B cell (primary cell): ENCODE measurements at regions of chr1 and their contacts with region 1.

Region 1: GRCh38 chr1:159161001-159161718 is 10.3 kb upstream of the CADM3 start:
- DNase-seq: peak; percentile 82
- ATAC-seq: peak; percentile 98
- H3K4me3 ChIP-seq: no peak overlapping the region
- H3K4me3 Mint-ChIP-seq: no peak overlapping the region
- H3K27ac ChIP-seq: no peak overlapping the region
- H3K27ac Mint-ChIP-seq: no peak overlapping the region
- H3K4me1 ChIP-seq: peaks cover 4 to 6% of the 10 kb centered on the region in 2 donors
- H3K4me1 Mint-ChIP-seq: peaks cover 7% of the 10 kb centered on the region
- H3K27me3 ChIP-seq: no peaks in the 10 kb centered on the region
- H3K27me3 Mint-ChIP-seq: no peaks in the 10 kb centered on the region
- CTCF ChIP-seq: peak; percentile 96

Region 2: DNA sequence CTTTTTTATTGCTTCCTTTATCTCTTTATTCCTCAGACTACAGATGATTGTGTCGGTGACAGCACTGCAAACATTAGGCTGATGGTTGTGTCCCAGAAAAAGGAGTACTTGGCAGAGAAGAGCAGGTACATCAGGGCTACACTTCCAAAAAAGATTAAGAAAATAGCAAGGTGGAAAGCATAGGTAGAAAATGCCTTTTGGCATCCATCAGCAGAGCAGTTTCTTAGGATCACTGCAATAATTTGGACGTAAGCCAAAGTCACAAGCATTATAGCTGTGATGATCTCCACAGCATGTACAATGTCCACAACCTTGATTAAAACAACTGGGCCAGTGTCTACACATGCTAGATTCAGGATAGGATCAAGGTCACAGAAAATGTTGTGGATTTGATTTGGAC is 466.6 kb before region 1 on chr1:
- CTCF ChIA-PET with region 1: no interaction called
- POLR2A ChIA-PET with region 1: no interaction called
- intact Hi-C with region 1: no loop called
- DNase-seq: no peak
- ATAC-seq: no peak
- H3K4me3 ChIP-seq: no peak overlapping the region
- H3K4me3 Mint-ChIP-seq: no peak overlapping the region
- H3K27ac ChIP-seq: no peak overlapping the region
- H3K27ac Mint-ChIP-seq: no peak overlapping the region
- H3K4me1 ChIP-seq: no peaks in the 10 kb centered on the region
- H3K4me1 Mint-ChIP-seq: no peaks in the 10 kb centered on the region
- H3K27me3 ChIP-seq: peaks cover 0 to 4% (median 0%) of the 10 kb centered on the region in 4 experiments
- H3K27me3 Mint-ChIP-seq: peaks cover 19% of the 10 kb centered on the region
- CTCF ChIP-seq: no peak

Region 3: DNA sequence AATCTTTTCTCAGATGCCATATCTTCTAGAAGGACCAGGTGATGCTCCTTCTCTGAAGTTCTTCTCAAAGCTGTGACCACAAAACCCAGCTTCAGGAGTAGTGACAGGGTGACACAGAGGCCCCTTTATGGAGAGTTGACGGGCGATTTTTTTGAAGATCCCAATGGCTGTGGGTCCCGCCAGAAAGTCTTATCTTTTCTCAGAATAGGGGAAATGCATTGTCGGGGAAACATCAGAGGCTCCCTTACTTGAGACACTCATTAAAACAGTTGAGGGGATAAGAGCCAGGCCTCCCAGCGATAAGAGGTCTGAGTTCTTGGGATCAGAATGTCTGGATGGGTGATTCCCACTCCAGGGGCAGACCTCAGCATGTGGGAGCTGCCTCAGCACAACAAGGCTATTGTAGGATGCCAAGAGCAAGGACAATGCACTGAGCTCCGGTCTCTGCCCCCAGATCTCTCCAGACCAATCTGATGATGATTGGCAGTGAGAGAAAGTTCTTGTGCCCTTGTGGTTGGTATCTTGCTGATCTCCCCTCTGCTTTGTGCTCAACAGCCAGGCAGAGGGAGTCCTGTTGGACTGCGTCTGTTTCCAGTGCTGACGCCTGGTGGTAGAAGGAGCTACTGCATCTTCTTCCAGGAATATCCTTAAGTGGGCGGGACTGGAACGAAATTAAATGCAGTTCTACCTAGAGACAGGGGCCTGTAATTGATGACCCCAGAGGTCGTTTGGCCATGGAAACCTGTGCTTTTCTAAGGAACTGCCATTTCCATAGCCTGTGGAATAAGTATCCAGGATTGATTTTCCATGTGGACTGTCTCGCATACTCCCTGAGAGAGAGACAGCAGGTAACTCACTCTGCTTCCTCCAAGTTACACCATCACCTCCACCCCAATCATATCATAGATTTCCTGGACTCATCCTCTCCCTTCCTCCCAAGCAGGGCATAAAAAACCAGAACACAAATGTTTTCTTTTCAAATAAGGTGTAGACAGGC is 36.7 kb after region 1 on chr1:
- CTCF ChIA-PET with region 1: interaction called, 102 read pairs
- POLR2A ChIA-PET with region 1: no interaction called
- intact Hi-C with region 1: loop called (anchors 1 kb)
- DNase-seq: peak; percentile 75
- ATAC-seq: peak; percentile 88
- H3K4me3 ChIP-seq: no peak overlapping the region
- H3K4me3 Mint-ChIP-seq: no peak overlapping the region
- H3K27ac ChIP-seq: no peak overlapping the region
- H3K27ac Mint-ChIP-seq: no peak overlapping the region
- H3K4me1 ChIP-seq: peaks cover 0 to 4% of the 10 kb centered on the region in 2 donors
- H3K4me1 Mint-ChIP-seq: no peaks in the 10 kb centered on the region
- H3K27me3 ChIP-seq: peaks cover 0 to 25% (median 4%) of the 10 kb centered on the region in 4 experiments
- H3K27me3 Mint-ChIP-seq: peaks cover 36% of the 10 kb centered on the region
- CTCF ChIP-seq: peak; percentile 80